Cardiac septum (tissue), 1 donor: ENCODE measurements at regions of chr5 and their contacts with region 1.

Region 1: GRCh38 chr5:32709781-32710549 is 1.2 kb upstream of the NPR3 start:
- DNase-seq: no peak

Region 2: DNA sequence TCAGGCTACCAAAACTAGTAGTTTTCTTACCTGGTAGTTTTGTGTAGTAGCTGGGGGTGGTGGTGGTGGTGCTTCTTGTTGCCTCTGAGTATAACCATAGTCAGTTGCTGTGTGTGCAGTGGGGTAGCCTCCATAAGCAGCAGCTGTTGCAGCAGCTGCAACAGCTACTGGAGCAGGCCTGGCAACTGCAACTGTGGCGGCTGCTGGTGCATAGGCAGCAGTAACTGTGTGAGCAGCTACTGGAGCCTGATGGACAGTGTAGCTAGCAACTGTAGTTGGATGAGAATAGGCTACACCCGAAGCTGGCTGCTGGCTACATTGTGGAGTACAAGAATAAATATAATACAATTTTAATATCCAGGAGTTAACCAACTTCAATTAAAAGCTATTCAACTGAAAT is 290.2 kb before region 1 on chr5:
- intact Hi-C with region 1: no loop called
- DNase-seq: no peak

Region 3: GRCh38 chr5:32794086-32794485 is 84.1 kb after region 1 on chr5:
- intact Hi-C with region 1: loop called (anchors 5 kb)
- DNase-seq: no peak

Region 4: GRCh38 chr5:32852535-32852934 is 142.6 kb after region 1 on chr5:
- intact Hi-C with region 1: loop called (anchors 2 kb)
- DNase-seq: no peak

Region 5: GRCh38 chr5:32916648-32917047 is 206.7 kb after region 1 on chr5:
- intact Hi-C with region 1: loop called (anchors 5 kb)
- DNase-seq: no peak

Region 6: DNA sequence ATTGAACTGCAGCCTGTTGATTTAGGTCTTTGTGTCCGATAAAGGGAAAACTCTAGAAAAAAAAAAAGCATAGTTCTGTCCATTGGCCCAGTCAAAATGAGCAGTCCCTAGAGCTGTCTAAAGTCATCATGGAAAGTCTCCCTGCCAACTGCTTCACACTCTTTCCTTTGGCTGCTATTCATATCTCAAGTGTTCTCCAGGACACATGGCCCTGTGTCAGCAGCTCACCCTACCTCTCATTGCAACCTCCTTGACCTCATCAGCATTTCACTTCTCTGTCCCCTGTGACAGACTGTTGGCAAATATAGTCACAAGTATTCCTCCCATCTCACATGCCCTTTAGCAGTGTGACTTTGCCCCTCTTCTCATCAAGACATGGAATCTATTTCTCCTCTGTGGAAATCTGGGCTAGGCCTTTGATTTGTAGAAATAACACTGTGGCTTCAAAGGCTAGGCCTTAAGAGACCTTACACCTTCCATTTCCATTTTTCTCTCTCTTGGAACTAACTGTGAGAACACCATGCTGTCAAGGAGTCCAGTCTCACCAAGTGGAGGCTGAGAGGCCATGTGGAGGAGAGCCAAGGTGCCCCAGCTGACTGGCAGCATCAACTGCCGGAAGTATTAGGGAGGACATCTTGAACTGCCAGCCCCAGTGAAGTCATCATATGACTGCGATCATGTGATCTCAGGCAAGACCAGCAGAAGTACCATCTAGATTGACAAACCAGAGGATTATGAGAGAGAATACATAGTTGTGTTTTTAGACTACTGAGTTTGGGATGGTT is 581.4 kb after region 1 on chr5:
- intact Hi-C with region 1: loop called (anchors 5 kb)
- DNase-seq: no peak

Region 7: GRCh38 chr5:33379757-33380156 is 669.8 kb after region 1 on chr5:
- intact Hi-C with region 1: loop called (anchors 5 kb)
- DNase-seq: no peak

Region 8: GRCh38 chr5:33423018-33423630 is 713.2 kb after region 1 on chr5:
- intact Hi-C with region 1: loop called (anchors 5 kb)
- DNase-seq: no peak